ENCODE measurements at regions of chr18 and their contacts with region 1.

Region 1: GRCh38 chr18:54269893-54270844 is 852 bp downstream of the POLI start:
- H3K4me3 ChIP-seq: peak overlapping the region; percentile 65
- H3K27ac ChIP-seq: peak overlapping the region; percentile 95
- H3K4me1 ChIP-seq: no peaks in the 10 kb centered on the region; the same call in 1 of the 2 replicates
- CTCF ChIP-seq: no peak

Region 2: GRCh38 chr18:54069729-54070128 is 200.4 kb before region 1 on chr18:
- CTCF ChIA-PET with region 1: no interaction called
- POLR2A ChIA-PET with region 1: no interaction called
- H3K4me3 ChIP-seq: no peak overlapping the region
- H3K27ac ChIP-seq: no peak overlapping the region
- H3K4me1 ChIP-seq: no peaks in the 10 kb centered on the region
- CTCF ChIP-seq: no peak

Region 3: GRCh38 chr18:54223568-54224241 is 46.5 kb before region 1 on chr18:
- CTCF ChIA-PET with region 1: interaction called, 9 read pairs
- POLR2A ChIA-PET with region 1: interaction called, 19 read pairs
- H3K4me3 ChIP-seq: peak overlapping the region; percentile 68
- H3K27ac ChIP-seq: peak overlapping the region; percentile 83
- H3K4me1 ChIP-seq: peaks cover 25% of the 10 kb centered on the region
- CTCF ChIP-seq: no peak

Region 4: GRCh38 chr18:54247511-54248175 is 22.5 kb before region 1 on chr18:
- CTCF ChIA-PET with region 1: no interaction called
- POLR2A ChIA-PET with region 1: no interaction called
- H3K4me3 ChIP-seq: no peak overlapping the region
- H3K27ac ChIP-seq: peak overlapping the region; percentile 17; the same call in 1 of the 2 replicates
- H3K4me1 ChIP-seq: peaks cover 10% of the 10 kb centered on the region
- CTCF ChIP-seq: no peak

Region 5: GRCh38 chr18:54357660-54358494 is 87.7 kb after region 1 on chr18 and contains the starts of genes C18orf54 and STARD6:
- CTCF ChIA-PET with region 1: no interaction called
- POLR2A ChIA-PET with region 1: interaction called, 24 read pairs
- H3K4me3 ChIP-seq: peak within 1 kb of the TSS; percentile 65
- H3K27ac ChIP-seq: peak within 1 kb of the TSS; percentile 85
- H3K4me1 ChIP-seq: peaks cover 3% of the 10 kb centered on the region; the same call in 1 of the 2 replicates
- CTCF ChIP-seq: peak; percentile 94

Measured in HEK293 (cell line).